ENCODE measurements at regions of chr10 and their contacts with region 1.

Region 1: GRCh38 chr10:24642622-24643417 is 80.9 kb downstream of the ARHGAP21 start:
- DNase-seq: peak; percentile 55
- ATAC-seq: peak; percentile 91
- H3K4me3 ChIP-seq: no peak overlapping the region
- H3K27ac ChIP-seq: no peak overlapping the region
- H3K4me1 ChIP-seq: peaks cover 13% of the 10 kb centered on the region
- H3K27me3 ChIP-seq: no peaks in the 10 kb centered on the region
- CTCF ChIP-seq: peak; percentile 68; the same call in 1 of the 2 replicates

Region 2: DNA sequence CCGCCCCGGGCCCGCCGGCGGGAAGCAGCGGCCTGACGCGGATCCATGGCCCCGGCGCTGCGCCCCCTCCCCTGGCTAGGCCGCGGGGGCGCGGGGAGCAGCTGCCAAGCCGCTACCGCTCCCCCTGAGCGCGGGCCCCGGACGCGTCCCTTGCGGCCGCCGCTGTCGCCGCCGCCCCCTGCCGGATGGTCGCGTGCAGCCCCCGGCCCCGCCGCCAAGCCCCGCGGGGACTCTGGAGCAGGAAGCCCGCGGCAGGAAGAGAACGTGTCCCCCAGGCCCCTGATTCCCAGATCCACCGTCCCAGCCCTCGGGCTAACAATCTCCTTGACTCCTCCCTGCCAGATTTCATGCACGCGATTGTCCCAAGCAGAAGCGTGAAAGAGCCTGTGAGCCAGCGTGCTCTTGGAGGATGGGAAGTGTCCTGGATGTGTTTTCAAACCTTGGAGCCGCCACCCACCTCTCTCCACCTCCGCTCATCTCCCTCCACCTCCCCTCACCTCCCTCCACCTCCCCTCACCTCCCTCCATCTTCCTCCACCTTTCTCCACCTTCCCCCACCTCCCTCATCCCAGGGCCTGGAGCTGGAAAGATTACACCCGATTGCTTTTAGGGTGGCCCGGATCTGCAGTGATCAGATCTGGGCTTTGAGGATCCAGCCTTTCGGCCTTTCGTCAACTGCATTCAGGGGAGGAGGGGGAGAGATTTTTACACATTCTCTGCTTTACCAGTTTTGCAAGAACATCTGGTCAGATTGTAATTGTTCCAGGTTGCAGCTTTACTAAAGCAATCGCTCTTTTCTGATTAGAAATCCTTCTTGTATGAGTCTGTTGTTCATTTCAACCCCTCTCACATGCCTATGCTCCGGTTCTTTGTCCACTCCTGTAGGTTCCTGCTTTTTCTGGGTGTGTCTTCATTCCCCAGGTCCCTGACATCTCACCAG is 310.2 kb after region 1 on chr10:
- CTCF ChIA-PET with region 1: no interaction called
- POLR2A ChIA-PET with region 1: no interaction called
- in situ Hi-C with region 1: no loop called
- intact Hi-C with region 1: loop called (anchors 5 kb)
- DNase-seq: no peak
- ATAC-seq: peak; percentile 75
- H3K4me3 ChIP-seq: peak overlapping the region; percentile 46 to 61
- H3K27ac ChIP-seq: peak overlapping the region; percentile 61
- H3K4me1 ChIP-seq: peaks cover 16% of the 10 kb centered on the region
- H3K27me3 ChIP-seq: no peaks in the 10 kb centered on the region
- CTCF ChIP-seq: peak; percentile 68

Region 3: DNA sequence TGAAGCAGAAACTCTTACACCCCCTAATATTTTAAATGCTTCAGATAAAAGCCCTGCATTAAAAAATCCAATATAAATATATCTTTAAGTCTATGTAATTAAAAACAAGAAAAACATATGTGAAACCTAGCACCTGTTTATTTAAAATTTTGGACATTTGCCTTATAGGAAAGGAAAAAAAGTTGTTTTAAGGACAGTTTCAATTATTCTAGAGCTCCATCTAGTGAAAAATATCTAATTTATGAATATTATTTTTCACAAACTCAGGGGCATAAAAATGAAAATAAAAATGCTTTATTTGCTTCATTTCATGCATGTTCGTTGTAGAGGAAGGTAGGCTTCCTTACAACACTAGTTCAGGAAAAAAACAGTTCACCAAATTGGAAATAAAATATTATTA is 347.0 kb after region 1 on chr10:
- CTCF ChIA-PET with region 1: no interaction called
- POLR2A ChIA-PET with region 1: no interaction called
- in situ Hi-C with region 1: no loop called
- intact Hi-C with region 1: loop called (anchors 10 kb)
- DNase-seq: no peak
- ATAC-seq: no peak
- H3K4me3 ChIP-seq: no peak overlapping the region
- H3K27ac ChIP-seq: no peak overlapping the region
- H3K4me1 ChIP-seq: peaks cover 4% of the 10 kb centered on the region; the same call in 1 of the 2 replicates
- H3K27me3 ChIP-seq: no peaks in the 10 kb centered on the region
- CTCF ChIP-seq: peak; percentile 16; the same call in 1 of the 2 replicates

Measured in Panc1 (cell line).